HepG2 (cell line): ENCODE measurements at regions of chr13 and their contacts with region 1.

Region 1: DNA sequence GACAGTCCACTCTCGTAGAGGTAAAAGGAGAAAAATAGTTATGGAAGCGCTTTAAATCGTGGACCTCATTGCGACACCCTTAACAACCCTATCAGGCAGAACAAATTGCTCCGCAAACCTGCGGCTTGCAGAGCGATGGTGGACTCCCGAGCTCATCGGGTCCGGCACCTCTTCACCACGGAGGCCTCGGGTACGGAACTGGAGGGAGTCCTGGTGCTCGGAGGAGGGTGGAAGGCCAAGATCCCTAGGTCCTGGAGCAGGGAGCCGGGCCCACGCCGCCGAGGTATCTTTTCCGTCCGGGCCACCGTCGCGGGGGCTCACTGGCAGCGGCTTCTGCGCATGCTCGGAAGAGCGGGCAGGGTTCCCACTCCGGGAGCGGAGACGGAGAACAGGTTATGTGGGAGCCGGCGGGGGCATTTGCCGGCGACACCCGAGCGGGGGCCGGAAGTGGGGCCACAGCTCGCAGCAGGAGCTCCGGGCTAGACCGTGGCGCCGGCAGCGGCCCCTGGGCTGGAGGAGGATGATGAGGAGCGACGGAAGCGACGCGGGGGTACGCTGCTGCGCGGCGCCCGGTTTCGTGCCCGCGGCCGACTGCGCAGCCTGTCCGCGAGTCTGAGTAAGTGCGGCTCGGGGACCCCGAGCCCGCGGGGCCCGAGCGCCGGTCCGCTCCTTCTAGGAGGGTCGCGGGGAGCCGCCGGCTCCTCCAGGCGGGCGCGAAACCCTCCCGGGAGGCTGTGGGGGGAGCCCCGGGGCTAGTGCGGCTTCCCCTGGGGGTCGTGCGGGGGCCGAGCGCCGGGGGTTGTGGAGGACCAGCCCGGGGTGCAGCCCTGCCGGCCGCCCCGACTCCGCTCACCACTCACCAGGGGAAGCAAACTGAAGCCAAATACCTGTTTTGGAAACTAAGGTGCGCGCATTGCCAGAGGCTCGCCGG is at the start of gene ABHD13:
- DNase-seq: peak; percentile 89
- ATAC-seq: peak; percentile 95
- H3K4me3 ChIP-seq: peak within 1 kb of the TSS; percentile 63 to 97 (median 93)
- H3K27ac ChIP-seq: peak within 1 kb of the TSS; percentile 92
- H3K4me1 ChIP-seq: peaks cover 40% of the 10 kb centered on the region
- H3K27me3 ChIP-seq: no peaks in the 10 kb centered on the region; a peak in 1 of 5 replicates
- CTCF ChIP-seq: peak; percentile 22; the same call in 1 of the 2 replicates
- EP300 ChIP-seq: no peak
- POLR2A ChIP-seq: peak; percentile 71 to 73
- RAD21 ChIP-seq: peak; percentile 44
- total RNA-seq, gene ABHD13: 6.1 and 6.2 TPM in 2 replicates

Region 2: DNA sequence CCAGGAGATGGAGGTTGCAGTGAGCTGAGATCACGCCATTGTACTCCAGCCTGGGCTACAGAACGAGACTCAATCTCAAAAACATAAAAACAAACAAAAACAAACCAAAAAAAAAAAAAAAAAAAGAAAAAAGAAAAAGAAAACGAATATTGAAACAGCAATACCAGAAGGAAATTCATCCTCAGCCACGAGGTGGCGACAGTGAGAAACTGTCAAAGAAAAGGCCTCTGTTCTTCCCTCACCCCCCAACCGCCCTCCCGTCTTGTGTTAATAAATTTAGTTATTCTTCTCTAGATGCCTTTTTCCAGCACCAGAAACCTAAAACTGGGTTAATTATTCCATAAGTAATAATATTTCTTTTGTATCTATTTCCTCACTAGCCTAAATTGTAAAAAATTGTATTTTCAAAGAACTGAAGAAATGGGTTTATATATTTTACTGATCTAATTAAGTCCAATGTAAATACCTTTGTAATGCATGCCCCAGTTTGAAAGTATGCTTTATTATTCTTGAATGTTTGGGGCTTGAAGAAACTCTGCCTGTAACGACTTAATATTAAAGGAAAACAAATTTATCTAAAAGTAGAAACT is 41.5 kb before region 1 on chr13:
- CTCF ChIA-PET with region 1: no interaction called
- POLR2A ChIA-PET with region 1: no interaction called
- in situ Hi-C with region 1: no loop called
- intact Hi-C with region 1: loop called (anchors 5 kb)
- DNase-seq: peak; percentile 42
- ATAC-seq: peak; percentile 52; the same call in 2 of the 3 replicates
- H3K4me3 ChIP-seq: no peak overlapping the region
- H3K27ac ChIP-seq: no peak overlapping the region
- H3K4me1 ChIP-seq: no peaks in the 10 kb centered on the region
- H3K27me3 ChIP-seq: no peaks in the 10 kb centered on the region
- CTCF ChIP-seq: peak; percentile 51
- EP300 ChIP-seq: no peak
- POLR2A ChIP-seq: no peak
- RAD21 ChIP-seq: no peak

Region 3: GRCh38 chr13:108470921-108471320 is 252.6 kb after region 1 on chr13:
- CTCF ChIA-PET with region 1: no interaction called
- POLR2A ChIA-PET with region 1: no interaction called
- in situ Hi-C with region 1: no loop called
- intact Hi-C with region 1: no loop called
- DNase-seq: no peak
- ATAC-seq: no peak
- H3K4me3 ChIP-seq: no peak overlapping the region
- H3K27ac ChIP-seq: no peak overlapping the region
- H3K4me1 ChIP-seq: no peaks in the 10 kb centered on the region
- H3K27me3 ChIP-seq: no peaks in the 10 kb centered on the region; a peak in 1 of 5 replicates
- CTCF ChIP-seq: no peak
- EP300 ChIP-seq: no peak
- POLR2A ChIP-seq: no peak
- RAD21 ChIP-seq: no peak

Region 4: DNA sequence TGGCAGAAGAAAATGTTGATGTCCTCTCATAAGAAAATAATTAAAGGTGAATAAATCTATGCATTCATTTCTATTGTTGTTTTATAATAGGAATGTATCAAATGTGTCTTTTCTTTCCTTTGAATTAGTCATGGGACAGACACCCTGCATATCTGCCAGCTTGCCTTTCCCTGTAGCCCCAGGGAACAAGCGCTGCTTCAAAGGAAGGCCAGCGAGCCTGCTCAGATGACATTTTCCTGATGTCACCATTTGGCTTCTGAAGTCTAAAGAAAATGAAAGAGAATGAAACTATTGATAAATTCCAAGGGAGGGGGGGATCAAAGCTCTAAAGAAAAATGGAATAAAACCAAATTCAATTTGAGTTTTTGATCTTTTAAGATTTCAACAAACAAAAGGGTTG is 993.3 kb after region 1 on chr13:
- CTCF ChIA-PET with region 1: no interaction called
- POLR2A ChIA-PET with region 1: no interaction called
- in situ Hi-C with region 1: no loop called
- intact Hi-C with region 1: no loop called
- DNase-seq: no peak
- ATAC-seq: no peak
- H3K4me3 ChIP-seq: no peak overlapping the region
- H3K27ac ChIP-seq: no peak overlapping the region
- H3K4me1 ChIP-seq: no peaks in the 10 kb centered on the region
- H3K27me3 ChIP-seq: no peaks in the 10 kb centered on the region
- CTCF ChIP-seq: no peak
- EP300 ChIP-seq: no peak
- POLR2A ChIP-seq: no peak
- RAD21 ChIP-seq: no peak

Region 5: GRCh38 chr13:110116072-110116487 is 1897.8 kb after region 1 on chr13:
- CTCF ChIA-PET with region 1: no interaction called
- POLR2A ChIA-PET with region 1: no interaction called
- in situ Hi-C with region 1: loop called (anchors 25 kb)
- intact Hi-C with region 1: no loop called
- DNase-seq: peak; percentile 4
- ATAC-seq: peak; percentile 68
- H3K4me3 ChIP-seq: no peak overlapping the region
- H3K27ac ChIP-seq: no peak overlapping the region
- H3K4me1 ChIP-seq: no peaks in the 10 kb centered on the region
- H3K27me3 ChIP-seq: no peaks in the 10 kb centered on the region; a peak in 2 of 5 replicates
- CTCF ChIP-seq: peak; percentile 75
- EP300 ChIP-seq: no peak
- POLR2A ChIP-seq: no peak
- RAD21 ChIP-seq: 0 out of 2 replicates have a peak, but pooled peaks have one; percentile 10